ENCODE measurements at regions of chr2 and their contacts with region 1.

Region 1: GRCh38 chr2:207166039-207166348 is 246 bp upstream of the KLF7 start:
- DNase-seq: peak; percentile 94
- H3K4me3 ChIP-seq: peak overlapping the region; percentile 91 to 93; a peak in 3 of 4 replicates
- H3K27ac ChIP-seq: peak overlapping the region; percentile 97 to 99
- H3K4me1 ChIP-seq: peaks cover 9 to 25% of the 10 kb centered on the region in 2 experiments; a peak in 2 of 4 replicates
- H3K27me3 ChIP-seq: no peaks in the 10 kb centered on the region
- CTCF ChIP-seq: no peak
- EP300 ChIP-seq: peak in 1 of 2 experiments; percentile 32; a peak in 1 of 4 replicates
- RAD21 ChIP-seq: no peak

Region 2: DNA sequence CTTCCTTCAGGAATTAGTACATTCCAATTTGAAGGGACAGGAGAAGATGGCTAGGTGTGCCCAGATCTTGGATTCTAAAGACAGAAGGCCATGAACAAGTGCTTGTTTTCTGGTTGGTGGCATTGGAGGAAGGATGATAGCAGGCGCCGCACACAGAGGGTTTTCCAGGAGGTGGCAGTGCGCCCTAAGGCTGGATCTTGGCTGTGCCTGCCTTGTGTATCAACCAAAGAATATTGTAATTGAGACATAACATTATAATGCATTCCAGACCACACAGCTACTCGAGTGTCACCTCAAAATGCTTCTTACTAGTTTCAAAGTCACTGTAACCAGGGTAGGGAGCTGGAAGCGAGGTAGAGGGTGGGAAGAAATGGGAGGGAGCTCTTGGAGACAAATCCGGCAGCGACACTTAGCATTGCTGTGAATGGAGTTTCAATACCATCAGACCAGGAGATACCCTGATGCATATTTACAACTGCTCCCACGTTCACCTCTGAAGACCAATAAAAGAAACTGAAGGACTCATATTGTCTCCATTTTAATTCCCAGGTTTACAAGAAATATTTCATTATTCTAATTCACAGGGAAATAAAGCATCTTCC is 184.2 kb before region 1 on chr2:
- CTCF ChIA-PET with region 1: interaction called, 47 read pairs
- POLR2A ChIA-PET with region 1: interaction called, 50 read pairs
- DNase-seq: peak; percentile 68
- H3K4me3 ChIP-seq: no peak overlapping the region; a peak in 1 of 4 replicates
- H3K27ac ChIP-seq: peak overlapping the region in 1 of 2 experiments; percentile 91; a peak in 2 of 4 replicates
- H3K4me1 ChIP-seq: peaks cover 4 to 37% of the 10 kb centered on the region in 2 experiments; a peak in 3 of 4 replicates
- H3K27me3 ChIP-seq: no peaks in the 10 kb centered on the region
- CTCF ChIP-seq: peak; percentile 95
- EP300 ChIP-seq: peak in 1 of 2 experiments; percentile 53; a peak in 1 of 4 replicates
- RAD21 ChIP-seq: peak; percentile 99

Region 3: GRCh38 chr2:207107551-207107950 is 58.4 kb before region 1 on chr2:
- CTCF ChIA-PET with region 1: interaction called, 11 read pairs
- POLR2A ChIA-PET with region 1: interaction called, 5 read pairs
- DNase-seq: peak; percentile 55
- H3K4me3 ChIP-seq: no peak overlapping the region
- H3K27ac ChIP-seq: peak overlapping the region in 1 of 2 experiments; percentile 87; a peak in 2 of 4 replicates
- H3K4me1 ChIP-seq: peaks cover 0 to 47% of the 10 kb centered on the region in 2 experiments; a peak in 2 of 4 replicates
- H3K27me3 ChIP-seq: no peaks in the 10 kb centered on the region
- CTCF ChIP-seq: no peak
- EP300 ChIP-seq: no peak
- RAD21 ChIP-seq: peak; percentile 12; the same call in 1 of the 2 replicates

Region 4: GRCh38 chr2:207252979-207253645 is 87.1 kb after region 1 on chr2:
- CTCF ChIA-PET with region 1: interaction called, 7 read pairs
- POLR2A ChIA-PET with region 1: interaction called, 16 read pairs
- DNase-seq: peak; percentile 56
- H3K4me3 ChIP-seq: no peak overlapping the region
- H3K27ac ChIP-seq: peak overlapping the region; percentile 88 to 97
- H3K4me1 ChIP-seq: peaks cover 62 to 69% of the 10 kb centered on the region in 2 experiments
- H3K27me3 ChIP-seq: no peaks in the 10 kb centered on the region
- CTCF ChIP-seq: no peak
- EP300 ChIP-seq: no peak
- RAD21 ChIP-seq: no peak

Region 5: DNA sequence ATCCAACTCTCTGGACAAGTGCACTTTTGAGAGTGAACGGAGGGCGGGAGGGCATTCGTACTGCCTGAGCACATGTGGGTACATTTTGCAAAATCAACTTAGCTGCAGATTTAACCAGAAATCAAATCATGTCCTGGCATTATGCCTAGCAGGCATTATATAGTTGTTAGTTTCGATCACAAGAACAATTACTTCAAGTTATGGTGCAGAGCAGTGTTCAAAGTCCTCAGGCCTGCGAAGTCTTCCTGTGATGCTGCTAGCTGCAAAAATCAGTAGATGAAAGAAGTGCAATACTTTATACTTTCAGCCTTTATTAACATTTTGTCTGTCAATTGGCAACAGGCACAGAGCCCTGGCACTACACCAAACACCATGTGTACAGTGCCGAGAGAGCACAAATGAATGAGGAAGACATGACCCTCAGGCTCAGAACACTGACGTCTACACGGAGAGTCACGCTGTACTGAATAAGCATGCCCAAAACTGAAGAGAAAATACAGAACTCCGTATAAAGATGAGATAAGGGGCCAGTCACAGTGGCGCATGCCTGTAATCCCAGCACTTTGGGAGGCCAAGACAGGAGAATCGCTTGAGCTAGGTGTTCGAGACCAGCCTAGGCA is 271.6 kb after region 1 on chr2:
- CTCF ChIA-PET with region 1: interaction called, 4 read pairs
- POLR2A ChIA-PET with region 1: interaction called, 70 read pairs
- DNase-seq: peak; percentile 47
- H3K4me3 ChIP-seq: no peak overlapping the region
- H3K27ac ChIP-seq: peak overlapping the region in 1 of 2 experiments; percentile 90; a peak in 2 of 4 replicates
- H3K4me1 ChIP-seq: peaks cover 0 to 26% of the 10 kb centered on the region in 2 experiments; a peak in 2 of 4 replicates
- H3K27me3 ChIP-seq: no peaks in the 10 kb centered on the region
- CTCF ChIP-seq: no peak
- EP300 ChIP-seq: peak in 1 of 2 experiments; percentile 24; a peak in 1 of 4 replicates
- RAD21 ChIP-seq: peak; percentile 1; the same call in 1 of the 2 replicates

Region 6: GRCh38 chr2:207594264-207594663 is 428.3 kb after region 1 on chr2:
- CTCF ChIA-PET with region 1: no interaction called
- POLR2A ChIA-PET with region 1: no interaction called
- DNase-seq: no peak
- H3K4me3 ChIP-seq: no peak overlapping the region
- H3K27ac ChIP-seq: no peak overlapping the region
- H3K4me1 ChIP-seq: peaks cover 0 to under 1% of the 10 kb centered on the region in 2 experiments; a peak in 1 of 4 replicates
- H3K27me3 ChIP-seq: no peaks in the 10 kb centered on the region
- CTCF ChIP-seq: no peak
- EP300 ChIP-seq: no peak
- RAD21 ChIP-seq: no peak

Measured in SK-N-SH (cell line).